ENCODE measurements at regions of chr5 and their contacts with region 1.

Region 1: GRCh38 chr5:10552183-10553143 is 11.4 kb upstream of the ANKRD33B start:
- DNase-seq: peak; percentile 47 to 51
- H3K4me3 ChIP-seq: no peak overlapping the region
- H3K27ac ChIP-seq: peak overlapping the region; percentile 91
- H3K4me1 ChIP-seq: peaks cover 74% of the 10 kb centered on the region
- H3K27me3 ChIP-seq: no peaks in the 10 kb centered on the region
- CTCF ChIP-seq: no peak

Region 2: GRCh38 chr5:9898319-9898718 is 654.1 kb before region 1 on chr5:
- CTCF ChIA-PET with region 1: no interaction called
- POLR2A ChIA-PET with region 1: no interaction called
- intact Hi-C with region 1: no loop called
- DNase-seq: no peak
- H3K4me3 ChIP-seq: no peak overlapping the region
- H3K27ac ChIP-seq: no peak overlapping the region
- H3K4me1 ChIP-seq: no peaks in the 10 kb centered on the region
- H3K27me3 ChIP-seq: no peaks in the 10 kb centered on the region
- CTCF ChIP-seq: peak; percentile 76

Region 3: GRCh38 chr5:10249948-10250803 is 302.3 kb before region 1 on chr5 and contains the start of gene CCT5:
- CTCF ChIA-PET with region 1: no interaction called
- POLR2A ChIA-PET with region 1: no interaction called
- intact Hi-C with region 1: loop called (anchors 5 kb)
- DNase-seq: peak; percentile 97 to 98
- H3K4me3 ChIP-seq: peak within 1 kb of the TSS; percentile 100
- H3K27ac ChIP-seq: peak within 1 kb of the TSS; percentile 91
- H3K4me1 ChIP-seq: peaks cover 17% of the 10 kb centered on the region
- H3K27me3 ChIP-seq: no peaks in the 10 kb centered on the region
- CTCF ChIP-seq: no peak
- total RNA-seq, gene CCT5: 658 and 831 TPM in 2 replicates

Region 4: GRCh38 chr5:10364186-10364683 is 188.2 kb before region 1 on chr5:
- CTCF ChIA-PET with region 1: no interaction called
- POLR2A ChIA-PET with region 1: no interaction called
- intact Hi-C with region 1: loop called (anchors 5 kb)
- DNase-seq: peak in 1 of 2 experiments; percentile 23
- H3K4me3 ChIP-seq: no peak overlapping the region
- H3K27ac ChIP-seq: no peak overlapping the region
- H3K4me1 ChIP-seq: 0 out of 2 replicates have a peak, but pooled peaks cover 19% of the 10 kb centered on the region
- H3K27me3 ChIP-seq: no peaks in the 10 kb centered on the region
- CTCF ChIP-seq: peak; percentile 61

Region 5: GRCh38 chr5:10489810-10490426 is 62.5 kb before region 1 on chr5:
- CTCF ChIA-PET with region 1: no interaction called
- POLR2A ChIA-PET with region 1: interaction called, 25 read pairs
- intact Hi-C with region 1: loop called (anchors 1 kb)
- DNase-seq: peak in 1 of 2 experiments; percentile 34
- H3K4me3 ChIP-seq: no peak overlapping the region
- H3K27ac ChIP-seq: no peak overlapping the region
- H3K4me1 ChIP-seq: peaks cover 18% of the 10 kb centered on the region
- H3K27me3 ChIP-seq: no peaks in the 10 kb centered on the region
- CTCF ChIP-seq: no peak

Region 6: DNA sequence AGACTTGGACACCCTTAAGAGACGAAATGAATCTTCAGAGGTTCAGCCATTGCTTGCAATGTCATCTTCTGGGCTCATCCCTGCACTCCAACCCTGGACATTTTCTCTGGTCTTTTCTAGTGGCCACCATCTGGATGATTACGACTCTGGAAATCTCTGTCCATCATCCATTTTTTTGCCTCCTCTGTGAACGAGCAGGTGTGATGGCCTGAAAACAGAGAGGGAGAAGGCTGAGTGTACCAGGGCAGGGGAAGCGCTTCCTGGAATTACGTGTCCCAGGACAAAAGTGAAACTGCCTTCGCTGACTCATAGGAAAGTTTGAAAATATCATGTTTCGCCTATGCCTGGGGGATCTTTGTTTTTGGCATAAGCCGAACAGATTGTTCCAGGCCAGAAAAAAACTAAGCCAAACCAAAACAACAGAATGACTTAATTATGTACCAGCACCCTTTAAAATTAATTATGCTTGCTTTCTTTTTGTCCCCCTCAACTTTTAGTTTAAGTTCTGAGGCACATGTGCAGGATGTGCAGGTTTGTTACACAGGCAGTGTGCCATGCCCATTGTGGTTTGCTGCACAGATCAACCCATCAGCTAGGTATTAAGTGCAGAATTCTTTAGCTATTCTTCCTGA is 43.3 kb after region 1 on chr5:
- CTCF ChIA-PET with region 1: no interaction called
- POLR2A ChIA-PET with region 1: interaction called, 6 read pairs
- intact Hi-C with region 1: loop called (anchors 1 kb)
- DNase-seq: peak; percentile 89 to 93
- H3K4me3 ChIP-seq: 0 out of 2 replicates have a peak overlapping the region, but pooled peaks have one; percentile 5
- H3K27ac ChIP-seq: peak overlapping the region; percentile 83
- H3K4me1 ChIP-seq: peaks cover 56% of the 10 kb centered on the region
- H3K27me3 ChIP-seq: no peaks in the 10 kb centered on the region
- CTCF ChIP-seq: no peak

Region 7: GRCh38 chr5:10701567-10702039 is 149.1 kb after region 1 on chr5:
- CTCF ChIA-PET with region 1: interaction called, 4 read pairs
- POLR2A ChIA-PET with region 1: interaction called, 6 read pairs
- intact Hi-C with region 1: loop called (anchors 1 kb)
- DNase-seq: peak in 1 of 2 experiments; percentile 44
- H3K4me3 ChIP-seq: peak overlapping the region; percentile 16; the same call in 1 of the 2 replicates
- H3K27ac ChIP-seq: peak overlapping the region; percentile 96
- H3K4me1 ChIP-seq: peaks cover 63% of the 10 kb centered on the region
- H3K27me3 ChIP-seq: no peaks in the 10 kb centered on the region
- CTCF ChIP-seq: peak; percentile 81

Region 8: DNA sequence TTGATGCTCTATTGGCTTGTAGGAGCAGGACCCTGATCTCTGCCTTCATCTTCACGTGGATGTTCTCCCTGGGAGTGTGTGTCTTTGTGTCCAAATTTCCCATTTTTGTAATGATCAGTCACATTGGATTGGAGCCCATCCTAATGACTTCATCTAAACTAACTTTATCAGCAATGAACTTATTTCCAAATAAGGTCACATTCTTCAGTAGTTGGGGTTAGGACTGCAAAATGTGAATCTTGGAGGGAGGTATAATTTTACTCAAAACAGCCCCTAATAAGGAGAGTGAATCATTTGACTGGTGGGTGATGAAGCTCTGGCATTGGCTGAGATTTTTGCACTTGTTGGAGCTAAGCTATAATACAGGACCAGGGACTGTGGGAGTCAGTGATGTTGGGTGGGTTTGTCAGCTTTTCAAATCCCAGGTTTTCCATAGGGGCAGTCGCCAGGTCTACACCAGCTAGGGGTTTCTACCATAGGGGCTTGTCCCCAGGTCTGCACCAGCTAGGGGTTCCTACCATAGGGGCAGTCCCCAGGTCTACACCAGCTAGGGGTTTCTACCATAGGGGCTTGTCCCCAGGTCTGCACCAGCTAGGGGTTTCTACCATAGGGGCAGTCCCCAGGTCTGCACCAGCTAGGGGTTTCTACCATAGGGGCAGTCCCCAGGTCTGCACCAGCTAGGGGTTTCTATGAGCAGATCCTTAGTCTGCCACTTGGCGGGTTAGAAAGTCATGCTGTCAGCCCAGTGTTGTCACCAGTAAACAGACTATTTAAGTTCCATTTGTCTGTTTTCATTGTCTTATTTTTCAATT is 591.2 kb after region 1 on chr5:
- CTCF ChIA-PET with region 1: no interaction called
- POLR2A ChIA-PET with region 1: no interaction called
- intact Hi-C with region 1: no loop called
- DNase-seq: no peak
- H3K4me3 ChIP-seq: no peak overlapping the region
- H3K27ac ChIP-seq: no peak overlapping the region
- H3K4me1 ChIP-seq: no peaks in the 10 kb centered on the region
- H3K27me3 ChIP-seq: peaks cover 76% of the 10 kb centered on the region
- CTCF ChIP-seq: no peak

Measured in PC-9 (cell line).